AG04449 (cell line): ENCODE measurements at regions of chr10 and their contacts with region 1.

Region 1: DNA sequence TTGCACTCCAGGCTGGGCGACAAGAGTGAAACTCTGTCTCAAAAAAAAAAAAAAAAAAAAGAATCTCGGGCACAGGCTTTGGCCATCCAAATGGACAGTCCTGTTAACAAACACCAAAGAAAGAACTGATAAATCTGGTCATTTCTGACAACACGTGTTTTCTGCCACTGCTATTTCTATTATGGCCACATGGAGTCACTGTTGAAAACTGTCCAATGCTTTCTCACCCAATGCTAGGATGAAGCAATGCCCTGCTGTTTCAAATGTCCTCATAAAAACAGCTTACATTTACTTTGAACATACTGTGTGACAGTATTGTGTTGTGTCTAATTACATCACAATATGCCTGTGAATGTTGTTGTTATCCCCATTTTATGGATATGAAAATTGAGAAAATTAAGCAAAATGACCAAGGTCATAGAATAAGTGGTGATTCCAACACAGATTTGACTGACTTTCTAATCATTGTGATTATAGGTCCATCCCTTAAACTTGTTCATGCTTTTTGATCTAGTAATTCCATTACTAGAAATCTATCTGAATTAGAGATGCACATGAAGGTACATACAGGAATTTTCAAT is 19.9 kb upstream of the MAP3K8 start:
- DNase-seq: no peak
- H3K4me3 ChIP-seq: no peak overlapping the region
- CTCF ChIP-seq: peak; percentile 76

Region 2: DNA sequence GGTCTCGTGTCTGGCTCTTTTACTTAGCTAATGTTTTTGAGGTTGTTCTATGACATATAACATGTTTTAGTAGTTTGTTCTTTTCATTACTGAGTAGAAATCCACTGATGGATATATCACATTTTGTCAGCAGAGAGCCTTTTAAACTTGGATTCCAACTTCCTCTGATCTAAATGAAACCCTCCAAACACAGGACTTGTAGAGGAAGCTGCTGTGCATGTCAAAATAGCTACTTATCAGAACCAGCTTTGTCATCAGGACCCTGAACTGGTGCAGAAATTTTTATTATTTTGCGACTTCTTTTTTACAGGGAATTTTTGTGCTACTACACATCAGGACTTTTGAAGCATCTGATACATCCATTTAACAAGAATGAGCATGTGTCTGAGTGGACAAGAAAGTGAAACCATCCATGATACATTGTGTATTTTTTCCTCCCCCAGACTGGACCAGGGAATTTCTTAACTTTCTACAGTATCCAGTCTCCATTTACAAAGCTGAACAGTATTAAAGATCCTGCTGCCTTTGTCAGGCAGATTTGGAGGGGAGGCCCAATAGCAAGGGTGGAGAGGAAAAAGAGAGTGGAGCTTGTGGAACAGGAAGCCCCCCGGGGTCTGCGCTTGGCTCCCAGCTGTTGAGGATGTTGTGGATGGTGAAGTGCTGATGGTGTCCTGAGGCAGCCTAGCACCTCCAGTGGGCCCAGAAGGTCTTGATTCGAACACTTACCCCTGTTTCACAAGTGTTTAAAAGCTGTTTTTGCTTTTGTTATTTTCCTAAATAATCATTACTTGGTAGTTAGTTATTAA is 35.7 kb before region 1 on chr10:
- CTCF ChIA-PET with region 1: no interaction called
- POLR2A ChIA-PET with region 1: no interaction called
- DNase-seq: no peak
- H3K4me3 ChIP-seq: no peak overlapping the region
- CTCF ChIP-seq: no peak

Region 3: GRCh38 chr10:30529373-30529998 is 115.4 kb after region 1 on chr10:
- CTCF ChIA-PET with region 1: interaction called, 52 read pairs
- POLR2A ChIA-PET with region 1: interaction called, 5 read pairs
- DNase-seq: no peak
- H3K4me3 ChIP-seq: no peak overlapping the region
- CTCF ChIP-seq: no peak